MCF 10A (cell line): ENCODE measurements at regions of chr18 and their contacts with region 1.

Region 1: DNA sequence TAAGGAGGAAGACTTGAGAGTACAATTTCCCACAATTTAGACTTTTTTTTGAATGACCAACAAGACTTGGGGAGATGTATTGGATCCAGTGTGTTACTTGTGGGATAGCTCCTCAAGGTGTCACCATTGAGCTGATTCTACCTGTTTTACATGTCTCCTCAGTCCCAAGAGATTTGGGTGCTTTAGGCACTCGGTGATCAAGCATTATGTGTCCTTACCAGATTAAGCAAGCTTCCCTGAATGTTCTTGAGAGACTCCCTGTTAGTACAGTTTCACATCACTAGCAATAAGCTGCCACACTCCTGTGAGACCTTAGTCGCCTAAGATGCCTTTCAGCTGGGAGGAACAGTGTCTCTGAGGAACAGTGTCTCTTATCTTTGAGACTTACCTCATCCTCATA is 384.3 kb upstream of the SYT4 start:
- DNase-seq: peak; percentile 87
- H3K4me3 Mint-ChIP-seq: no peak overlapping the region
- H3K27ac Mint-ChIP-seq: no peak overlapping the region
- H3K4me1 Mint-ChIP-seq: peaks cover 21% of the 10 kb centered on the region
- H3K27me3 Mint-ChIP-seq: no peaks in the 10 kb centered on the region
- CTCF ChIP-seq: peak; percentile 57

Region 2: DNA sequence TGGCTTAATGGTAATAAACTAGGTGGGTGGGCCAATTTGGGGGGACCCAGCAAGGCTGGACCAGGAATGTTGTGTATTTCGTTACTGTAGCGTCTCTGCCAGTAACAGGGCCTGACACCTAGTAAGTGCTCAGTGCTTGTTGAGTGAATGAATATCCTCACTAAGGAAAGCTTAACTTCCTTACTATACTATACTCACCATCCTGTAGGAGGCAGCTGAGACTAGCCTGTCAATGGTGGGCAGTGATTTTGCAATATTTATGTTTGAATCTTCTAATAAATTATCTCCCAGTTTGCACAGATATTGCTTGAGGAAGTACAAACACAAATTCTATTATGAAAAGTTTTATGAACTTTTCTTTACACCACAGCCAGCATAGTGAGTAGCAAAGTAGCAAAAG is 13.6 kb before region 1 on chr18:
- CTCF ChIA-PET with region 1: interaction called, 12 read pairs
- POLR2A ChIA-PET with region 1: interaction called, 5 read pairs
- intact Hi-C with region 1: no loop called
- DNase-seq: no peak
- H3K4me3 Mint-ChIP-seq: no peak overlapping the region
- H3K27ac Mint-ChIP-seq: no peak overlapping the region
- H3K4me1 Mint-ChIP-seq: no peaks in the 10 kb centered on the region
- H3K27me3 Mint-ChIP-seq: no peaks in the 10 kb centered on the region
- CTCF ChIP-seq: no peak

Region 3: DNA sequence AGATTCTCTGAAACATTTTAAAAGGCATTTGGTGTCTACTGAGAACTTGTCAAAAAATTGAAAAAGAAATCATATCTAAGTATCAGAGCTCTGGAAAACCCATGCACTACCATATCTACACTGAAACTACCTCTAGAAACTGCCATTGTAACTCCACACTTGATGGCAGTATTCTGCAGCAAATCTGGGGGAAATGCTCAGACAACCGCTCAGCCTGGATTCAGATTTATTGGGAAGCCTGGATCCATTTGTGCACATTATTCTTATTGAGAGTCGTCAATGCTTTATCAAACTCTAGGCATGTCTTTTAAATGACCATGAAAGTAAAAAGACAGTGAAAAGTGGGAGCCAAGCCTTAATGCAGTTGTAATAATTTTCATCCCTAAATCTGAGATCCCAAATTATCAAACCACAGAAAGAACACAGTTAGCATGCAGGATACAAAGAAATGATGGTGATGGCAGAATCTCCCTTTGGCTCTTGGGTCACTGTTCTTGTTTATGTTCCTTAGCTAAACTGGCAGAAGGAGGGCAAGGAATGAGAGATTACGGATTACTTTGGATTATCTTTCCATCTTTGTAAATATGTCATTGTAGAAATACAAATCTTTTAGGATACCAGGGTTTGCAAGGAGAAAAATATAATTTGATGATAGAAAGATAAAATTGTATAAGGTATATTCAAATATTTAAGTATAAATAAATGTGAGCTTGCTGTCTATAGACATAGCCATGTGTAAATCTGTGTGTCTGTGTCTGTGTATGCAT is 127.8 kb after region 1 on chr18:
- CTCF ChIA-PET with region 1: interaction called, 5 read pairs
- POLR2A ChIA-PET with region 1: no interaction called
- intact Hi-C with region 1: loop called (anchors 5 kb)
- DNase-seq: peak; percentile 19
- H3K4me3 Mint-ChIP-seq: no peak overlapping the region
- H3K27ac Mint-ChIP-seq: no peak overlapping the region
- H3K4me1 Mint-ChIP-seq: peaks cover 13% of the 10 kb centered on the region
- H3K27me3 Mint-ChIP-seq: no peaks in the 10 kb centered on the region
- CTCF ChIP-seq: no peak

Region 4: DNA sequence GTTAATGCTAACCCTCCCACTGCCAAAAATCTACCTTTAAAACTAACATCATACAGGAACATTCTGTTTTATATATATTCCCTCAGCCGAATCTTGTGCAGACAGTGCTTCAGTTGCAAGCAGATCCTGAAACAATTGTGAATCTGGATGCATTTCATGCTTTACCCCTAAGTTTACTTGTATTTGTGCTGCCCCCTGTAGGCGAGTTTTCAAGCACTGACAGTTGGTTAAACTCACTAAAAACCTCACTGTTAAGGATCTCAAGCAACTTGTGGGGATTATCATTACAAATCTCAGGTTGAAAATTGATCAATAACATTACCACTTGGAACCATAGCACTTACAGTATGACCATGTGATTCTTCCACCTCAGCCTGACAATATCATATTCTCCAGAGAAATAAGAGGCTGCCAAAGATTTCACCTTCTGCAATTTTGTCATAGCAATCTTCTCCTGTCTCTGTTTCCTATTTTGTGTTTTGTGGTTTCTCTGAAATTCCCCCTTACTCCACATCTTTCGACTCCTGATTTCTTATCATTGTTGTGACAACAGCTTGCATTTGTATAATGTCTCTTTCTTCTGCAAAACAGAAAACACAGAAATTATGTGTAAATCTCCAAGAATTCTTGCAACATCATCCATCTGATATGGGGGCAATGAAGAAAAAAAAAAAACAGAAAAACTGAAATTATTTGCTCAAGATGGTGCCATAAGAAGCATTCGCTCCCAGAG is 664.5 kb after region 1 on chr18:
- CTCF ChIA-PET with region 1: interaction called, 12 read pairs
- POLR2A ChIA-PET with region 1: no interaction called
- intact Hi-C with region 1: loop called (anchors 1 kb)
- DNase-seq: peak; percentile 78
- H3K4me3 Mint-ChIP-seq: no peak overlapping the region
- H3K27ac Mint-ChIP-seq: no peak overlapping the region
- H3K4me1 Mint-ChIP-seq: no peaks in the 10 kb centered on the region
- H3K27me3 Mint-ChIP-seq: no peaks in the 10 kb centered on the region
- CTCF ChIP-seq: peak; percentile 54